Endothelial cell of umbilical vein (primary cell): ENCODE measurements at regions of chr7 and their contacts with region 1.

Region 1: DNA sequence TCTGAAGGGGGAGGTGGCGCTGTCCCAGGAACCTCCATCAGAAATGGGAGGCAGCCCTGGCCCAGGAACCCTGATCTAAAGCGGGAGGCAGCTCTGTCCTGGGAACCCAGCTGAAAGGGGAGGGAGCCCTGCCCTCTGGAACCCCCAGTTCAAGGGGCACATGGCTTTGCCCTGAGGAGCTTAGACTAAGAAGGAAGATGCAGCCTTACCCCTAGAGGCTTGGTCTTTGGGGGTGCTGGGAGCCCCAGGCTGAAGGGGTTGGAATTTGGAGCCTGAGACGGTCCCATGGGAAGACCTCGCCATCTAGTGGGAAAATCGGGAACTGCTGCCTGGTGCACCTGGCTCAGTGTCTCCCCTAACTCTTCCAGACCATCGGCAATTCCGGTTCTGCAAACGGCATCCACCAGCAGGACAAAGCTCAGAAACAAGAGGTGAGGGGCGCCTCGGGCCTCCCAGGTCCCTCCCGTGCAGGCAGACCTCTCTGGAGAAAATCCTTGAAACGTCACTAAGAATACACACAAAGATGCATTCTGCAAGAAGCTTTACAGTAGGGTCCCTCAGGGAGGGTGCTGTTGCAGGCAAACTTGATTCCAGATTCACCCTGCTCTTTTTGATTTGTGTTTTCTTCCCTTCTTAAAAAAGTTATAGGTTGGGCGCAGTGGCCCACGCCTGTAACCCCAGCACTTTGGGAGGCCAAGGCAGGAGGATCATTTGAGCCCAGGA is 52.4 kb upstream of the GTF2IRD1 start:
- DNase-seq: peak; percentile 52
- H3K4me3 ChIP-seq: no peak overlapping the region
- H3K27ac ChIP-seq: no peak overlapping the region
- H3K4me1 ChIP-seq: no peaks in the 10 kb centered on the region
- H3K27me3 ChIP-seq: no peaks in the 10 kb centered on the region
- CTCF ChIP-seq: peak; percentile 88 to 95
- POLR2A ChIP-seq: no peak

Region 2: DNA sequence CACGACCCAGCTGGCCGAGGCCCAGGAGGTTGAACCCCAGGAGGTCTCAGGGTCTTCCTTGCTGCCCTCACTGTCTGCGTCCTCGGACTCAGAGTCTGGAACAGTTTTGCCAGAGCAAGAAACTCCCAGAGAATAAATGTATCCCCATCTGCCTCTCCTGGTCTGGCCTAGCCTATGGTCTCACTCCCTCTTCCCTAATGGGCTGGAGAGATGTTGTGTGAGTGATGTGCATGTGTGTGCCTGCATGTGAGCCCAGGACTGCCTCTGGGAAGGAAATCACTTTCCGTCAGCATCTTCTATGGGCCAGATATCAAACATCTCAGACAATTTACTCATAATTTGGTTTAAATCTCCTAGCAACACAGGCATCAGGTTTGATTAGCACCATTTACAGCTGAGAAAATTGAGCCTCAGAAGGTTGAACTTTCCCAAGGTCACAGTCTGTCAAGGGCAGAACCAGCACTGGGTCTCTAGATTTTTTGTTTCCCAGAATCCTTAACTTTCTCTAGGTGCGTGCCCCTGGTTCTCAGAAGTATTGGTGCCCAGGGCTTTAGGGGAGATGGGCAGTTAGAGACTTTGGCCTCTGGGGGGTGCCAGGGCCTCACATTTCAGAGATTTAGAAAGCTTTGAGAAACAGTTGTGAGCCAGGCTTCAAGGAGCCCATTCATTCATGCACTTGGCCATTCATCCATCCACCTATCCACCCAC is 535.4 kb before region 1 on chr7:
- CTCF ChIA-PET with region 1: interaction called, 15 read pairs
- POLR2A ChIA-PET with region 1: no interaction called
- dilution Hi-C with region 1: no loop called
- intact Hi-C with region 1: no loop called
- DNase-seq: peak; percentile 62
- H3K4me3 ChIP-seq: no peak overlapping the region
- H3K27ac ChIP-seq: no peak overlapping the region
- H3K4me1 ChIP-seq: no peaks in the 10 kb centered on the region
- H3K27me3 ChIP-seq: no peaks in the 10 kb centered on the region
- CTCF ChIP-seq: peak; percentile 61 to 77
- POLR2A ChIP-seq: no peak

Region 3: GRCh38 chr7:74226633-74227032 is 174.7 kb before region 1 on chr7:
- CTCF ChIA-PET with region 1: interaction called, 10 read pairs
- POLR2A ChIA-PET with region 1: no interaction called
- dilution Hi-C with region 1: no loop called
- intact Hi-C with region 1: no loop called
- DNase-seq: no peak
- H3K4me3 ChIP-seq: no peak overlapping the region
- H3K27ac ChIP-seq: no peak overlapping the region
- H3K4me1 ChIP-seq: no peaks in the 10 kb centered on the region
- H3K27me3 ChIP-seq: no peaks in the 10 kb centered on the region
- CTCF ChIP-seq: no peak
- POLR2A ChIP-seq: no peak

Region 4: GRCh38 chr7:74272305-74273038 is 128.8 kb before region 1 on chr7:
- CTCF ChIA-PET with region 1: interaction called, 17 read pairs
- POLR2A ChIA-PET with region 1: no interaction called
- dilution Hi-C with region 1: no loop called
- intact Hi-C with region 1: no loop called
- DNase-seq: peak; percentile 90
- H3K4me3 ChIP-seq: no peak overlapping the region
- H3K27ac ChIP-seq: peak overlapping the region; percentile 88
- H3K4me1 ChIP-seq: peaks cover 16% of the 10 kb centered on the region
- H3K27me3 ChIP-seq: no peaks in the 10 kb centered on the region
- CTCF ChIP-seq: no peak
- POLR2A ChIP-seq: no peak

Region 5: GRCh38 chr7:74289018-74289658 is 112.2 kb before region 1 on chr7 and contains the start of gene CLIP2:
- CTCF ChIA-PET with region 1: interaction called, 22 read pairs
- POLR2A ChIA-PET with region 1: no interaction called
- dilution Hi-C with region 1: no loop called
- intact Hi-C with region 1: no loop called
- DNase-seq: peak; percentile 67
- H3K4me3 ChIP-seq: peak within 1 kb of the TSS; percentile 75 to 90 (median 85)
- H3K27ac ChIP-seq: peak within 1 kb of the TSS; percentile 29
- H3K4me1 ChIP-seq: peaks cover 11% of the 10 kb centered on the region
- H3K27me3 ChIP-seq: no peaks in the 10 kb centered on the region
- CTCF ChIP-seq: no peak
- POLR2A ChIP-seq: peak; percentile 65
- total RNA-seq, gene CLIP2: 37.1 and 38.0 TPM in 2 replicates

Region 6: DNA sequence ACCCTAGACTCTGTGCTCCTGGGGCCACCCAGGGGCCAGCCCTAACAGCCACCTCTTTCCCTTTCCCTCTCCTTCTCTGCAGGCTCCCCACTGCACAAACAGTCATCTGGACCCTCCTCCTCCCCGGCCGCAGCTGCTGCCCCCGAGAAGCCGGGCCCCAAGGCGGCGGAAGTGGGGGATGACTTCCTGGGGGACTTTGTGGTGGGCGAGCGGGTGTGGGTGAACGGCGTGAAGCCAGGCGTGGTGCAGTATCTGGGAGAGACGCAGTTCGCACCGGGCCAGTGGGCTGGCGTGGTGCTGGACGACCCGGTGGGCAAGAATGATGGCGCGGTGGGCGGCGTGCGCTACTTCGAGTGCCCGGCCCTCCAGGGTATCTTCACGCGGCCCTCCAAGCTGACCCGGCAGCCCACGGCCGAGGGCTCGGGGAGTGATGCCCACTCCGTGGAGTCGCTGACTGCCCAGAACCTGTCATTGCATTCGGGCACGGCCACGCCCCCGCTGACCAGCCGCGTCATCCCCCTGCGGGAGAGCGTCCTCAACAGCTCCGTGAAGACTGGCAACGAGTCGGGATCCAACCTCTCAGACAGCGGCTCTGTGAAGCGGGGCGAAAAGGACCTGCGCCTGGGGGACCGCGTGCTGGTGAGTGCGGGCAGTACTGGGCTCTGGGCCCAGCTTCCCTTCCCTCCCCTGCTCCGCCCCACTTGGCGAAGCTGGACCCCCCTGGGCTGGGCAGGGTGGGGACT is 62.8 kb before region 1 on chr7:
- CTCF ChIA-PET with region 1: no interaction called
- POLR2A ChIA-PET with region 1: no interaction called
- dilution Hi-C with region 1: no loop called
- intact Hi-C with region 1: no loop called
- DNase-seq: no peak
- H3K4me3 ChIP-seq: no peak overlapping the region
- H3K27ac ChIP-seq: no peak overlapping the region
- H3K4me1 ChIP-seq: no peaks in the 10 kb centered on the region
- H3K27me3 ChIP-seq: no peaks in the 10 kb centered on the region
- CTCF ChIP-seq: no peak
- POLR2A ChIP-seq: no peak

Region 7: GRCh38 chr7:74417419-74417971 is 16.2 kb after region 1 on chr7:
- CTCF ChIA-PET with region 1: interaction called, 10 read pairs
- POLR2A ChIA-PET with region 1: no interaction called
- dilution Hi-C with region 1: no loop called
- intact Hi-C with region 1: no loop called
- DNase-seq: peak; percentile 57
- H3K4me3 ChIP-seq: no peak overlapping the region
- H3K27ac ChIP-seq: no peak overlapping the region
- H3K4me1 ChIP-seq: no peaks in the 10 kb centered on the region
- H3K27me3 ChIP-seq: no peaks in the 10 kb centered on the region
- CTCF ChIP-seq: peak; percentile 87 to 94
- POLR2A ChIP-seq: no peak

Region 8: GRCh38 chr7:74502181-74502891 is 101.0 kb after region 1 on chr7:
- CTCF ChIA-PET with region 1: no interaction called
- POLR2A ChIA-PET with region 1: no interaction called
- dilution Hi-C with region 1: no loop called
- intact Hi-C with region 1: no loop called
- DNase-seq: no peak
- H3K4me3 ChIP-seq: no peak overlapping the region
- H3K27ac ChIP-seq: no peak overlapping the region
- H3K4me1 ChIP-seq: no peaks in the 10 kb centered on the region
- H3K27me3 ChIP-seq: no peaks in the 10 kb centered on the region
- CTCF ChIP-seq: no peak
- POLR2A ChIP-seq: no peak